ENCODE measurements at regions of chr10 and their contacts with region 1.

Region 1: DNA sequence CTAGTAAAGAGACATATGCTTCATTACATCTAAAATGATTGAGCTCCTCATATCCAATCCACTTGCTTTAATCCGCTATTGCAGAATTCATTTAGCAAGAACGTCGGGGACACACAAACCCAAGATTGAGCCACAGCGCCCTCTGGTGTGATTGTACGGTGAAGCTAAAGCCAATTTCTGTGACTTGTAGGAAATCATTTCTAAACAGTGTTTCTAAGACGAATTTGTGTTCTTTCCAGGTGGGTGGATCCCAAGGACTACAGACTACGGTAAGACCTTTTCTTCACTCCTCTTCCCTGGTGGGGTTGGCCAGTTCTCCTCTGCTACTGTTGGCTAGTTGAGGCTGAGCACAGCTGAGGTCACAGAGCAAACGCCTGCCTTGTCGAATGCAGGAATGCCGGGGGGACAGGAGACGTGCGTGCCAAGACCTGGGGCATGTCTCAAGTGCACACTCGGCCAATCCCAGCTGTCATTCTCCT is 5.2 kb downstream of the DMBT1 start:
- DNase-seq: peak; percentile 62 to 79
- H3K4me3 ChIP-seq: no peak overlapping the region
- H3K4me3 Mint-ChIP-seq: no peak overlapping the region
- H3K27ac Mint-ChIP-seq: no peak overlapping the region
- H3K4me1 ChIP-seq: peaks cover 10% of the 10 kb centered on the region
- H3K4me1 Mint-ChIP-seq: peaks cover 14% of the 10 kb centered on the region
- H3K27me3 ChIP-seq: peaks cover 2% of the 10 kb centered on the region
- H3K27me3 Mint-ChIP-seq: peaks cover 6% of the 10 kb centered on the region
- CTCF ChIP-seq: peak; percentile 84 to 86

Region 2: DNA sequence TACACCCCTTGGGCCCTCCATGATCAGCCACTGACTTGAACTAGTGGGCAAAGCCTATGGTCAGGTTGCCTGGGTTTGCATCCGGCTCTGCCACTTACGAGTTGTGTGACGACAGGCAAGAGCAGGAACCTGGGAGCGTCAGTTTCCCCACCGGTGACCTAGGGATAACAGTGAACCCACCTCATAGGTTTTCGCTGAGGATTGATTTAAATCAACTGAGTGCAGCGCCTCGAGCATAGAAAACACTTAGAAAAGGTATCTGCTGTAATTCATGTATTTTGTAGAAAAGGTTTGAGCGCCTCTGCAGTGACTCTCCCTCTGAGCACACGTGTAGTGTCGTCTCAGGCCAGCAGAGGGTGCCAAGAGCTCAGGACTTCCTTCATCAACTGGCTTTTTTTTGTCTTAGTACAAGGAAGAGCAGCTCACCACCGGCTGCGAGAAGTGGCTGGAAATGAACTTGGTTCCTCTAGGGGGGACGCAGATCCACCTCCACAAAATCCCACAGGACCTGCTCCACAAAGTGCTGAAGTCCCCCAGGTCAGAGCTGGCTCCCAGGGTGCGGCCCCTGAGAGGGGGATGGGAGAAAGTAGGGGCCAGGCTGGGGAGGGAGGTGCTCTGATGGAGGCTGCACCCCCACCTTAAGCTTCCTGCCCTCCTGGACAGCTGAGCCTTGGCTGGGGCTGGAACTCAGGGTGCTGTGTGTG is 267.0 kb before region 1 on chr10:
- CTCF ChIA-PET with region 1: interaction called, 28 read pairs
- POLR2A ChIA-PET with region 1: no interaction called
- intact Hi-C with region 1: loop called (anchors 1 kb)
- DNase-seq: peak; percentile 70 to 75
- H3K4me3 ChIP-seq: 0 out of 2 replicates have a peak overlapping the region, but pooled peaks have one; percentile 18
- H3K4me3 Mint-ChIP-seq: no peak overlapping the region
- H3K27ac Mint-ChIP-seq: no peak overlapping the region
- H3K4me1 ChIP-seq: peaks cover 15% of the 10 kb centered on the region
- H3K4me1 Mint-ChIP-seq: peaks cover 11% of the 10 kb centered on the region
- H3K27me3 ChIP-seq: no peaks in the 10 kb centered on the region
- H3K27me3 Mint-ChIP-seq: no peaks in the 10 kb centered on the region
- CTCF ChIP-seq: peak; percentile 92 to 96

Region 3: DNA sequence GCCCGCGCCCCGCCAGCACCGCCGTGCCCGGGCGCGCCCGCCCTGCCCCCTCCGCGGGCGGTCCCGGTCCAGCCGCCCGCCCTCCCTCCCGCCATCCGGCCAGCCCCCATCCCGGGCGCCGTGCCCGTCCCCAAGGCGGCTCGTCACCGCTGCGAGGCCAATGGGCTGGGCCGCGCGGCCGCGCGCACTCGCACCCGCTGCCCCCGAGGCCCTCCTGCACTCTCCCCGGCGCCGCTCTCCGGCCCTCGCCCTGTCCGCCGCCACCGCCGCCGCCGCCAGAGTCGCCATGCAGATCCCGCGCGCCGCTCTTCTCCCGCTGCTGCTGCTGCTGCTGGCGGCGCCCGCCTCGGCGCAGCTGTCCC is 104.4 kb before region 1 on chr10 and contains the start of gene HTRA1:
- CTCF ChIA-PET with region 1: no interaction called
- POLR2A ChIA-PET with region 1: no interaction called
- intact Hi-C with region 1: loop called (anchors 10 kb)
- DNase-seq: peak in 1 of 2 experiments; percentile 61
- H3K4me3 ChIP-seq: peak within 1 kb of the TSS; percentile 39
- H3K4me3 Mint-ChIP-seq: peak within 1 kb of the TSS; percentile 63
- H3K27ac Mint-ChIP-seq: no peak within 1 kb of the TSS
- H3K4me1 ChIP-seq: peaks cover 5% of the 10 kb centered on the region
- H3K4me1 Mint-ChIP-seq: no peaks in the 10 kb centered on the region
- H3K27me3 ChIP-seq: peaks cover 19% of the 10 kb centered on the region
- H3K27me3 Mint-ChIP-seq: peaks cover 40% of the 10 kb centered on the region
- CTCF ChIP-seq: no peak
- total RNA-seq, gene HTRA1: 0.70 and 1.1 TPM in 2 replicates

Region 4: GRCh38 chr10:122525788-122526187 is 40.0 kb before region 1 on chr10:
- CTCF ChIA-PET with region 1: interaction called, 22 read pairs
- POLR2A ChIA-PET with region 1: no interaction called
- intact Hi-C with region 1: loop called (anchors 1 kb)
- DNase-seq: peak in 1 of 2 experiments; percentile 59
- H3K4me3 ChIP-seq: no peak overlapping the region
- H3K4me3 Mint-ChIP-seq: no peak overlapping the region
- H3K27ac Mint-ChIP-seq: no peak overlapping the region
- H3K4me1 ChIP-seq: no peaks in the 10 kb centered on the region
- H3K4me1 Mint-ChIP-seq: peaks cover 7% of the 10 kb centered on the region
- H3K27me3 ChIP-seq: no peaks in the 10 kb centered on the region
- H3K27me3 Mint-ChIP-seq: peaks cover 3% of the 10 kb centered on the region
- CTCF ChIP-seq: peak; percentile 68 to 79

Region 5: DNA sequence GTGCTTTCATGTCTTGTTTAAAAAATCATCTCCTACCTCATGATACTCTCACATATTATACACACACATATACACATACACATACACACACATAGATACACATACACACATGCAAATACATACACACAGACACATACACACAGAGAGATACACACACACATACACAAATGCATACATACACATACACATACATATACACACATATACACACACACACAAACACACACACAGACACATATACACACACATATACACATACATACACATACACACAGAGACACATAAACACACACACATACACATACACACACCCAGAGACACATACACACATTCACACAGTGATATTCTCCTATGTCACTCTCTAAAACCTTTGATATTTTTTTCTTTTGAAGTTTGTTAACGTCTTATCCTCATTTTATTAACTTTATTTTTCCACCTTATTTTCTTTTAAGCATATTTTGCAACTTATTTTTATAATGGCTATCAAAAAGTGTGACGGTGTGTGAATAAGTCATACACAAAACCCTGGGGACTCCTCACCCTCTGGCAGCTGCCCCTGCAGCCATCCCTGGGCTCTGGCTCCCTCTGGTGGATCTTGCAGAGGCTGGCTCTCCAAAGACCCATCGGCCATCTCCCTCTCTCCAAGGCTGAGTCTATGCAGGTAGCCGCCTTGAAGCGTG is 137.8 kb after region 1 on chr10:
- CTCF ChIA-PET with region 1: interaction called, 3 read pairs
- POLR2A ChIA-PET with region 1: no interaction called
- intact Hi-C with region 1: loop called (anchors 5 kb)
- DNase-seq: peak; percentile 75 to 80
- H3K4me3 ChIP-seq: no peak overlapping the region
- H3K4me3 Mint-ChIP-seq: no peak overlapping the region
- H3K27ac Mint-ChIP-seq: no peak overlapping the region
- H3K4me1 ChIP-seq: no peaks in the 10 kb centered on the region
- H3K4me1 Mint-ChIP-seq: no peaks in the 10 kb centered on the region
- H3K27me3 ChIP-seq: no peaks in the 10 kb centered on the region
- H3K27me3 Mint-ChIP-seq: peaks cover 4% of the 10 kb centered on the region
- CTCF ChIP-seq: peak; percentile 88 to 95

Measured in Caco-2 (cell line).